ENCODE measurements at regions of chr4 and their contacts with region 1.

Region 1: GRCh38 chr4:4859843-4860802 is 658 bp downstream of the MSX1 start:
- DNase-seq: no peak
- H3K4me3 Mint-ChIP-seq: peak overlapping the region; percentile 66
- H3K27ac Mint-ChIP-seq: peak overlapping the region; percentile 4
- H3K4me1 Mint-ChIP-seq: peaks cover 9% of the 10 kb centered on the region
- H3K27me3 Mint-ChIP-seq: peaks cover 75% of the 10 kb centered on the region

Region 2: GRCh38 chr4:4800646-4801408 is 59.3 kb before region 1 on chr4:
- intact Hi-C with region 1: no loop called
- DNase-seq: no peak
- H3K4me3 Mint-ChIP-seq: no peak overlapping the region
- H3K27ac Mint-ChIP-seq: no peak overlapping the region
- H3K4me1 Mint-ChIP-seq: no peaks in the 10 kb centered on the region
- H3K27me3 Mint-ChIP-seq: no peaks in the 10 kb centered on the region

Region 3: DNA sequence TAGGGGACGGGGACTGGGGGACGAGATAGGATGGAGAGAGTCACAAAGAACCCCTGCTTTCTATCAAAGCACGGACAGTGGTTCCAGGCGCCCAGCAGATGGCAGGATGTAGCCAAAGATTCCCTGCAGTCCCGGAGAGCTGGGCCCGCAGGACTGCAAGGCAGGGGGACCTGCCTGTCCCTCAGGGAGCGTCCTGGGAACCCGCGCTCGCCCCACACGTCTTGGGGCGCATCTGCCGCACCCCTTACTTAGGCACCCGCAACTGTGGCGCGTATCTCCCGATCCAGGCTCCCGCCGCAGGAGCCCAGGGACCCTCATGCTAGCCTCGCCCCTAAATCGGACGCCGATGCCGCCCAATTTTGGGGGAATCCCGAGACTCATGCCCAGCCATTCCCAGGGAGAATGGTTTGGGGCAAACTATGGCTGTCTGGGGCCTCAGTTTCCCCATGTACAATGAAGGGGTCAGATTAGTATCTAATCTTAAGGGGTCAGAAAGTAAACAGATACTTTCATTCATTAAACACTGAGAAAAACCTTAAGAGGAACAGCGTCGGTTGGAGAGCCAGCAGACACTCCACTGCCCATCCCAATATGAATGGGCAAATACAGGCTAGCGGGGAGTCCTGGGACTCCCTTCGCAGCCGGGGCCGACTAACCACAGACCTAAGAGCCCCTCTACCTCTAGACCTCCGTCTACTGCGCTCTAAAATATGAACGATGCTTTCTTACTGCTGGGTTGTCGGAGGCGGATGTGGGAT is 190.6 kb after region 1 on chr4:
- intact Hi-C with region 1: loop called (anchors 5 kb)
- DNase-seq: peak; percentile 65
- H3K4me3 Mint-ChIP-seq: peak overlapping the region; percentile 75
- H3K27ac Mint-ChIP-seq: no peak overlapping the region
- H3K4me1 Mint-ChIP-seq: peaks cover 7% of the 10 kb centered on the region
- H3K27me3 Mint-ChIP-seq: peaks cover 42% of the 10 kb centered on the region

Region 4: DNA sequence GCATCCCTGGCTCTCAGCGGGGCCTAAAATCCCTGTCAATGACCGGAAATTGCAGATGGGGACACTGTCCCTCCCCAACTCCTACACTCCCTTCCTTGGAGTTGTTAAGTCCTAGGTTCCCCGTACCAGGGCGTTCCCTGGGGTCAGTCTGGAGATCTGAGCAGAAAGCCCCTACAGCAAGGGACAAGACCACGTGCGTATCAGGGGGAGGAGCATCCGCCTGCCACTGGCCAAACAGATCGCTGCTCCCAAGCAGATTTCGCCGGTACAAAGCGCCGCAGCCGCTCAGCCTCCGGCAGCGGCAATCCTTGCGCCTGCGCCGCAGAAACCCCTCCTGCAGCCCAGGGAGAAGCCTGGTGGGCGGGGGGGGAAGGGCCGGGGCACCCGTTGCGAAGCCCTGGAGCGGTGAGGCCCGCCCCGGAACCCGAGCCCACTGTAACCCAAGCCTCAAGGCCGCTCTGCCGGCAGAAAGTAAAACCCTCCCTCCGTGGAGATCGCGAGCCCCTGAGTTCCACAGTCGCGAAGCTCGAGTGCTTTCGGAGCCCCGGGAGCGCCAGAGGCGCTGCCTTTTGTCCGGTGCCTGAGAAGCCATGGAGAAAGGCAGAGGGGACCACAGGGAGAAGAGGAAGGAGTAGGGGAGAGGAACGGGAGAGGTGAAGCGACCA is 1030.1 kb after region 1 on chr4:
- intact Hi-C with region 1: loop called (anchors 5 kb)
- DNase-seq: no peak
- H3K4me3 Mint-ChIP-seq: no peak overlapping the region
- H3K27ac Mint-ChIP-seq: no peak overlapping the region
- H3K4me1 Mint-ChIP-seq: no peaks in the 10 kb centered on the region
- H3K27me3 Mint-ChIP-seq: peaks cover 68% of the 10 kb centered on the region